Posterior vena cava (tissue), 2 donors: ENCODE measurements at regions of chr3 and their contacts with region 1.

Region 1: GRCh38 chr3:25594007-25594502 is 70.7 kb downstream of the TOP2B start:
- DNase-seq: no peak

Region 2: DNA sequence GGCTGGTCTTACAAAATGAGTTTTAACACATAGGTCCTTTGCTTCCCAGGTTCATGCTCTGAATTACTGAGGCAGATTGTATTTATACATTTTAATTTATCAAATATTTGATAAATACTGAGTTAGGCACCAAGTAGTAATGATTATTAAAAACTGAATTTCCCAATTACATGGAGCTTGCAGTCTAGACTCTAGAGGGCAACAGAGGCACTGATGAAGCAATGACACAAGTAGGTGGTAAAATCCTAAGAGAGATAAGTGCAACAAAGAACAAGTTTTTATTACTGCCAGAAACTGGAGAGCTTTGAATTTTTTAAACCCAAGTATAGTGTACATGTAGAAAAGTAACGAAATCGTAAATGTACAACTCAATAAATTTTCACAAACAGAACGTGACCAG is 572.2 kb before region 1 on chr3:
- intact Hi-C with region 1: loop called in 1 of 2 experiments (anchors 5 kb)
- DNase-seq: no peak

Region 3: DNA sequence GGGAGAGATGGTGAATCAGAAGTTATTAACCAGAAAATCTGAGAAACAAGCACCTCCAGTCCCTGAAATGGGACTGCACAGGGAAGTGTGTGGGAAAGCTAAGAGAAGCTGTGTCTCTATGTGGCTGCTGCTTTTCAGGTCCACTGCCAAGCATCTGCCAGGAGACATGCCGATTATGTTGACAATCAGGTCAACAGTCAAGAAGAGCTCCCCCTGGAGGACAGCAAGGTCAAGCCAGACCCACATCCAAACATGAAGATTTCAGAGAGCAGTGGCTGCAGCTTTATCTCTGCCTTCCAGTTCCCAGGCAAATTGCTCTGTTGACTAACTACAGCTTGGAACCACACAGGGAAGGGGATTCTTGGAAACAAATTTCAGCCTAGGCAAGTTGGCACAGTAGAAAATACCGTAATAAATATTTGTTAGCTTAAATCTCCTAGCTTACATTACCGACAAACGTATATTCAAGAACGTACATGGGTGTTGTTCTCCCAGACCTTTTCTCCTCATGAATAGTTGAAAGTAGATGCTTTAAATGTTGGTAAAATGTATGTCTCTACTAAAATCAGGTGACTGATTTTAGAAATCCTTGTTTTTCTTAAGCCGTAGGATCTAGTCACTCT is 560.5 kb before region 1 on chr3:
- intact Hi-C with region 1: no loop called
- DNase-seq: no peak

Region 4: DNA sequence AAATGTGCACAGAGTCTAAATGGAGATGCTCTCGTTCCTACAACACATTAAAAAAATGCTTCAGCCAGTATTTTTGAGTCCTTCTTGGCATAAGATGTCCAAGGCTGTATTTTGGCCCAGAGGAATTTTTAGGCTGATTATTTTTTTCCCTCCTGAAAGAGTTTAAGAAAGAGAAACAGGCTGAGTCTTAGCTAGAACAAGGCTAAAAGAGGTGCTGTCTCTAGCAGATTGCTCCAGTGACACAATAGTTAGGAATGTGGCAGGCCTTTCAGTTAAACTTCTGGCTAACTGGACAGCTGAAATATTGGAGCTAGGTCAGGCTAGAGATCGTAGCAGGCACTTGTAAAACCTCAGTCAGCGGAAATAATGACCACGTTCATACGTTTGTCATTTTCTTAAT is 437.4 kb before region 1 on chr3:
- intact Hi-C with region 1: loop called in 1 of 2 experiments (anchors 10 kb)
- DNase-seq: no peak

Region 5: DNA sequence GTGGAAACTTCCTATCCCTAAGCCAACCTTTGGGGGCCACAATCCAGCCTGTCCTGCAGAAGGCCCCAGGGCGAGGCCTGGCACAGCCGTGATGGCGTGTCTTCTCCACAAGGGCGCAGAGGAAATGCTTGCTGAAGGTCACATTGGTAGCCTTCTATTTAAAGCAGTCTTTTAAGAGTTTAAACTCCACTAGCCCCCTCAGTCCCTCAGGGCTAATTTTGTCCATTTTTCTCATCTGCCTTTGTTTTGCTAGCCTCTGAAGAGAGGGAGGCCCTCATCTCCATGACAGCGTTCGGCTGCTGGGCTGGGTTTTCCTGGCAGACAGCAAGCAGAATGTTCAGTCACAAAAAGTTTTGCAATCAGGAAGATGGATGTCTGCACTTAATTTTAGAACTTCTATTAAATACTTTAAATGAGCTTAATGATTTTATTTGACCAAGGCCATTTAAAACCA is 125.2 kb before region 1 on chr3:
- intact Hi-C with region 1: loop called in 1 of 2 experiments (anchors 10 kb)
- DNase-seq: peak; percentile 89